Cardiac septum (tissue), 1 donor: ENCODE measurements at regions of chr4 and their contacts with region 1.

Region 1: GRCh38 chr4:16858275-16858752 is 40.1 kb downstream of the LDB2 start:
- DNase-seq: no peak

Region 2: DNA sequence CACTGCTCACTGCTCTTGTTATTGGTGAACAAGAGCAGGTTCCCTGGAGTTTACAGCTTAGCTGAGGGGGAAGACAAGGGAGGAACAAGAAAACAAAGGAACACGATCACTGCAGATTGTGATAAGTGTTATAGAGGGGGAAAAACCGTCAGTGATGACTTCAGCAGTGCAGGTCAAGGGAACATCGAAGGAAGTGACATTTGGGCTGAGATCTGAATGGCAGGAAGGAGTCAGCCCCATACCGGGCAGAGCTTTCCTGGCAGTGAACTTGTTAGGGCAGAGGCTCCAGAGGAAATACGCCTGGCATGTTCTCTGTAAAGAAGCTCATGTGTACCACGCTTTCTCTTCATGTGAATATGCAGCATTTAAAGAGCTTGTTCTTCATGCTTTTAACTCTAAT is 38.0 kb before region 1 on chr4:
- intact Hi-C with region 1: loop called (anchors 5 kb)
- DNase-seq: no peak

Region 3: DNA sequence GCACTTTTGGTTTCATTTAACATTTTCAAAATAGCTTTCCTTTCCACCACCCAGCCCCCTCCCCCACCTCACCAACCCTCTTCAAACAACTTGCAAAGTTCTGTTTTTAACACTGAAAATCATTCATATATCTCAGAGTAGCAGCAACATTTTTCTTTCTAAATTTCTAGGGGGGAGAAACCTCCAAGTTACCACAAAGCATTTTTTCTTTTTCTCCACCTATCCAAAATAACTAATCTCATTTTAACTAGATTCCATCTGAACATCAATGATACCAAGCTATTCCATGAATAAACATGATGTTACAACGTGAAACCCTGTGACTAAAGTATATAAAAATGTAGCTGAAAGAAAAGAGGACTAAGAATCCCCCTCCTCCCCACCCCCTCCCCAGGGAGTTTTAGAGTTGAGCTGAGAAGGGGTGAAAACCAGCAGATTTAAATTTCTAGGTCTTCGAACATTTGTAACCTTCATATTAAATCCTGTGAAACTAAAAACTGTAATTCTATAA is 34.9 kb after region 1 on chr4:
- intact Hi-C with region 1: loop called (anchors 5 kb)
- DNase-seq: no peak